PC-9 (cell line): ENCODE measurements at regions of chr3 and their contacts with region 1.

Region 1: GRCh38 chr3:185659942-185660921 is 74.1 kb downstream of the SENP2 start:
- DNase-seq: peak; percentile 74
- H3K4me3 ChIP-seq: no peak overlapping the region
- H3K27ac ChIP-seq: peak overlapping the region; percentile 1; the same call in 1 of the 2 replicates
- H3K4me1 ChIP-seq: peaks cover 17% of the 10 kb centered on the region
- H3K27me3 ChIP-seq: no peaks in the 10 kb centered on the region
- CTCF ChIP-seq: peak; percentile 100

Region 2: DNA sequence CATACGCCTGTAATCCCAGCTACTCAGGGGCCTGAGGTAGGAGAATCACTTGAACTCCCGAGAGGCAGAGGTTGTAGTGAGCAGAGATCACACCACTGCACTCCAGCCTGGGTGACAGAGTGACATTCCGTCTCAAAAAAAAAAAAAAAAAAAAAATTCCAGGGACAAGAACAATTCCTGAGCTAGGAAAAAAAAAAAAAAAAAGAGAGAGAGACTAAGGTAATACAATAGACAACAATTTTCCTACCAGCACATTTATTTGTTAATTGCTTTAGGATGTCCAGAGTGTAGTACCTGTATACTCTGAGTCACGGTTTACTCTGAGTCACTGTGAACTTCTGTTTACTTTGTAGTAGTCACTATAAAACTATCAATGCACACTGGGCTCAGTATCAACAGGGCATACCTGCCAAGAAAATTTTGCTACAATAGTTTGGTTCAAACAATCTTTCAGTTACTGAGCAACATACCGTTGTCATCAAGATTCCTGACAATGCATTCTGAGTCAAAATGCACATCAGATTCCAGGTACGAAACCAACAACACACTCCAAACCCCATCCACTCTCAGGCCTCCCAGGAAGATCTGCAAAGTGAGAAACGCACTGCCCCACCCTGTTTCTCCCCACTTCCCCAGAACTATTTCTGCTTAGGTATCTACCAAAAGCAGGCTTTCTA is 136.3 kb after region 1 on chr3:
- CTCF ChIA-PET with region 1: interaction called, 13 read pairs
- POLR2A ChIA-PET with region 1: no interaction called
- intact Hi-C with region 1: no loop called
- DNase-seq: peak; percentile 86 to 100
- H3K4me3 ChIP-seq: 0 out of 2 replicates have a peak overlapping the region, but pooled peaks have one; percentile 10
- H3K27ac ChIP-seq: peak overlapping the region; percentile 93
- H3K4me1 ChIP-seq: peaks cover 63% of the 10 kb centered on the region
- H3K27me3 ChIP-seq: no peaks in the 10 kb centered on the region
- CTCF ChIP-seq: no peak

Region 3: DNA sequence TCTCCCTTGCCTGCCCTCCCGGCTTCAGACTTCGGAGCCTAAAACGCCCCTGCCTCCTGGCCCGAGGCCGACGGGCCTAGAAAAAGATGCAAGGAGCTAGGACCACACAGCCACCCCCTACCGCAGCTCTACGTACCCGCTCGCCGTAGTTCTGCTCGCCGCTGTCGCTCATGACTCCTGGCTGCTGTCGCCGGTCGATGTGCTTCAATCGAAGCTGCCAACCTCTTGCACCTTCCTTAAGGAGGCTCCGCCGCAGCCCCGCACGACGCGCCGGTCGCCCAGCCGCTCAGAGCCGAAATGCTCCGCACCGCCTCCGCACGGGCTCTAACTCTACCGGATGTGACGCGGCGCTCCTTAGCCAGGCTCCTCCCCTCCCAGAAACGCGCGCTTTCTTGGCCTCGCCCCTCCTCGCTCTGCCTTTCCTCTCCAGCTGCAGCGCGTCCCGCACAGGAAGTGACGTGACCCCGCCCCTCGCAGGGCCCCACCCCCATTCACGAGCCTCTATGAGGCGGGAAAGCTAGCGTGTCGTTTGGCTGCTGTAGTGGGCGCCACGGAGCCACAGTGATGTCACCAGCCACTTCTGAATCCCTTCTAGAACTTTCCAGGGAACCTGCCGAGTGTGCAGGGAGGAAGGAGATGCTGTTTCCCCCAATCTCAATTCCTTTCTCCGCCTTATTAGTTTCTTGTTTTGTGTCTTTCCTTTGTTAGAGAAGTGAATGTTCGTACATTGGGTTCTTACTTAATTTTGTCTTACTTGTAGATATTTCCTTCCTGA is 277.6 kb after region 1 on chr3 and contains the start of gene TRA2B:
- CTCF ChIA-PET with region 1: interaction called, 15 read pairs
- POLR2A ChIA-PET with region 1: no interaction called
- intact Hi-C with region 1: loop called (anchors 2 kb)
- DNase-seq: peak; percentile 93 to 99
- H3K4me3 ChIP-seq: peak within 1 kb of the TSS; percentile 98
- H3K27ac ChIP-seq: peak within 1 kb of the TSS; percentile 95
- H3K4me1 ChIP-seq: peaks cover 64% of the 10 kb centered on the region
- H3K27me3 ChIP-seq: no peaks in the 10 kb centered on the region
- CTCF ChIP-seq: peak; percentile 22; the same call in 1 of the 2 replicates
- total RNA-seq, gene TRA2B: 117 and 158 TPM in 2 replicates

Region 4: GRCh38 chr3:186241910-186242821 is 581.9 kb after region 1 on chr3:
- CTCF ChIA-PET with region 1: interaction called, 25 read pairs
- POLR2A ChIA-PET with region 1: no interaction called
- intact Hi-C with region 1: loop called (anchors 1 kb)
- DNase-seq: peak; percentile 86 to 89
- H3K4me3 ChIP-seq: peak overlapping the region; percentile 61
- H3K27ac ChIP-seq: peak overlapping the region; percentile 70
- H3K4me1 ChIP-seq: peaks cover 18% of the 10 kb centered on the region
- H3K27me3 ChIP-seq: no peaks in the 10 kb centered on the region
- CTCF ChIP-seq: peak; percentile 81

Region 5: GRCh38 chr3:186540221-186540834 is 880.1 kb after region 1 on chr3:
- CTCF ChIA-PET with region 1: interaction called, 11 read pairs
- POLR2A ChIA-PET with region 1: no interaction called
- intact Hi-C with region 1: loop called (anchors 5 kb)
- DNase-seq: peak; percentile 79 to 86
- H3K4me3 ChIP-seq: no peak overlapping the region; the same call in 1 of the 2 replicates
- H3K27ac ChIP-seq: no peak overlapping the region
- H3K4me1 ChIP-seq: 0 out of 2 replicates have a peak, but pooled peaks cover 3% of the 10 kb centered on the region
- H3K27me3 ChIP-seq: no peaks in the 10 kb centered on the region
- CTCF ChIP-seq: peak; percentile 97